ENCODE measurements at regions of chr20 and their contacts with region 1.

Region 1: GRCh38 chr20:45095753-45096371 is 5.1 kb downstream of the KCNS1 start:
- DNase-seq: peak; percentile 69
- CTCF ChIP-seq: peak; percentile 77

Region 2: GRCh38 chr20:45011108-45011526 is 84.7 kb before region 1 on chr20:
- CTCF ChIA-PET with region 1: interaction called, 36 read pairs
- POLR2A ChIA-PET with region 1: no interaction called
- DNase-seq: peak; percentile 24
- CTCF ChIP-seq: peak; percentile 70

Region 3: DNA sequence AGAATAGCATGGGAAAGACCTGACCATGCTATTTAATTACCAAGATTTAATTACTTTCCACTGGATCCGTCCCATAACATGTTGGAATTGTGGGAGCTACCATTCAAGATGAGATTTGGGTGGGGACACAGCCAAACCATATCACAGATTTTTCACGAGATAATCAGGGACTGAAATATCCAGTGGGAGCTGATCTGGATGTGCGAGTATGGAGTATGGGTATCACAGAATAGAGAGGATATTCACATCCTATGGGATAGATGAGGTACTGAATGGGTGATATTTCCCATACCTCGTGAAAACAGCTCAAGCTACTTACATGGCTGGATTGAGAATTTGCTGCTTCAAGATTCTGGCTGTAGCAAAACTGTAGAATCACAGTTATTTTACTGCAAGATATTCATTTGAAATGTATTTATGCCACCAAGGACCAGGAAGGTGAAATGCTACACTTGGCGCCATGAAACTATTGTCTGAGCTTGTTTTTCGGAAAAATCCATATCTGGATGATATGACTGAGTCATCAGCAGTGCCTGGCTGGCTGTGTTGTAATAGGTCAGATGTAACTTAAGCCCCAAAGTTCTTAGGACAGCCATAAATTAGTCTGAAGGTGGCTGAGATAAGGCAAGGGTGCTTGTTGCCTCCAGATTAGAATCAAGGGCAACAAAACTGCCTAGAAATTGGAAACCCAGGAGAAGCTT is 24.8 kb before region 1 on chr20:
- CTCF ChIA-PET with region 1: interaction called, 33 read pairs
- POLR2A ChIA-PET with region 1: no interaction called
- DNase-seq: no peak
- CTCF ChIP-seq: no peak

Region 4: DNA sequence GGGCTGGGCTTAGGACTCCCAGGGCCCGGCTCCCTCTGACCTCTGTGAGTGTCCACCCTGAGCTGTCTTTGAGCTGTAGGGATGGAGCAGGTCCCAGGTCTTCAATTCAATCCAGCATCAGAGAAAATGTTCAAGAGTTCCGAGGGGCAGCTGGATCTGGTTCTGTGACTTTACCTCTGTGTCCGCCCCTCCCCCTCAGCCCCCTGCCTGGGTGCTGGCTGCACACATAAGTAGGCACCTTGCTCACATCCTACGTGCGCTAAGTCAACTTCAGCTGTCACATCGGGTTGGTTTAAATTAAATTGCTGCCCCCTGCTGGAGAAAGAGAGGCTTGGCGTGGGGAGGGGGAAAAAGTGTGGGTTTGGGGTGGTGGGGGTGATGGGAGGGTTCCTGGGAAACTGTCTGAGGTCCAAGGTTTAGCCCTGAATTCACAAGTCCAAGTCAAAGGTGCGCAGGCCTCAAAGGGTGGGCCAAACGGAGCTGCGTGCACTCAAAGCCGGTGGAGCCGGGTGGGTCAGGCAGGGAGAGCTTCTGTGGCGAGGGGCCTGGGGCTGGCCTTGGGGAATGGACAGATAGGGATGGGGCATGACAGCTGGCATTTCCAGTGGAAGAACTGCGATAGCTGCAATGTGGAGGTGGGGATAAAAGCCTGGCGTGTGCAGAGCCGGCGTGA is 16.1 kb after region 1 on chr20:
- CTCF ChIA-PET with region 1: interaction called, 183 read pairs
- POLR2A ChIA-PET with region 1: no interaction called
- DNase-seq: no peak
- CTCF ChIP-seq: peak; percentile 47

Region 5: GRCh38 chr20:45157962-45158361 is 62.1 kb after region 1 on chr20:
- CTCF ChIA-PET with region 1: no interaction called
- POLR2A ChIA-PET with region 1: no interaction called
- DNase-seq: no peak
- CTCF ChIP-seq: no peak

Region 6: DNA sequence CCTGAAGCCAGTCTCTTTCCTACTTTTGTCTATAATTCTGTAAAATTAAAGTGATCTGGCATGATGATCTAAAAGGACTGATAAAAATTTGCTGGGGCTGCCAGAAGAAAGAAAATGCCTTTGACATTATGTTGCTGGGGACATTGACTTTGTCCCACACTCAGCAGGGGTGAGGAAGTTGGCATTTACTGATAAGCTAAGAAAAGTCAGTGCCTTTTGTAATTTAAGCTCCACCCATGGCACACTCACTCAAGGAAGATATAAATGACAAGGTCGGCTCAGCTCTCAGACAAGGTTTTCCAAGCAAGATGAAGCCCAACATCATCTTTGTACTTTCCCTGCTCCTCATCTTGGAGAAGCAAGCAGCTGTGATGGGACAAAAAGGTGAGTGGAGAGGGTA is 110.9 kb after region 1 on chr20 and contains the start of gene SEMG1:
- CTCF ChIA-PET with region 1: no interaction called
- POLR2A ChIA-PET with region 1: no interaction called
- DNase-seq: no peak
- CTCF ChIP-seq: no peak

Region 7: GRCh38 chr20:45322952-45323383 is 227.1 kb after region 1 on chr20:
- CTCF ChIA-PET with region 1: no interaction called
- POLR2A ChIA-PET with region 1: no interaction called
- DNase-seq: peak; percentile 63
- CTCF ChIP-seq: peak; percentile 15